ENCODE measurements at regions of chr2 and their contacts with region 1.

Region 1: GRCh38 chr2:112584134-112584890 is at the start of gene CHCHD5:
- DNase-seq: peak; percentile 85 to 89
- H3K4me3 ChIP-seq: peak within 1 kb of the TSS; percentile 82 to 93 (median 88)
- H3K27ac ChIP-seq: peak within 1 kb of the TSS; percentile 96
- H3K4me1 ChIP-seq: peaks cover 0 to 4% (median 2%) of the 10 kb centered on the region in 4 experiments; a peak in 4 of 7 replicates
- H3K27me3 ChIP-seq: no peaks in the 10 kb centered on the region
- CTCF ChIP-seq: no peak; a peak in 1 of 4 replicates
- EP300 ChIP-seq: peak in 1 of 2 experiments; percentile 48; a peak in 1 of 3 replicates
- POLR2A ChIP-seq: peak in 1 of 2 experiments; percentile 92; a peak in 2 of 3 replicates
- RAD21 ChIP-seq: no peak
- total RNA-seq, gene CHCHD5: 27.2 and 30.2 TPM in 2 replicates

Region 2: GRCh38 chr2:112216166-112216565 is 368.1 kb before region 1 on chr2:
- CTCF ChIA-PET with region 1: no interaction called
- POLR2A ChIA-PET with region 1: no interaction called
- DNase-seq: no peak
- H3K4me3 ChIP-seq: no peak overlapping the region
- H3K27ac ChIP-seq: no peak overlapping the region
- H3K4me1 ChIP-seq: no peaks in the 10 kb centered on the region
- H3K27me3 ChIP-seq: no peaks in the 10 kb centered on the region
- CTCF ChIP-seq: peak in 2 of 3 experiments; percentile 2 to 39; a peak in 2 of 4 replicates
- EP300 ChIP-seq: no peak
- POLR2A ChIP-seq: no peak
- RAD21 ChIP-seq: peak; percentile 39 to 43

Region 3: GRCh38 chr2:112606488-112606902 is 22.2 kb after region 1 on chr2:
- CTCF ChIA-PET with region 1: interaction called, 11 read pairs
- POLR2A ChIA-PET with region 1: no interaction called
- DNase-seq: no peak
- H3K4me3 ChIP-seq: no peak overlapping the region
- H3K27ac ChIP-seq: no peak overlapping the region
- H3K4me1 ChIP-seq: no peaks in the 10 kb centered on the region
- H3K27me3 ChIP-seq: no peaks in the 10 kb centered on the region
- CTCF ChIP-seq: no peak
- EP300 ChIP-seq: no peak
- POLR2A ChIP-seq: no peak
- RAD21 ChIP-seq: no peak